GM12878 (cell line): ENCODE measurements at regions of chr16 and their contacts with region 1.

Region 1: GRCh38 chr16:23835390-23836077 is at the start of gene PRKCB:
- DNase-seq: no peak
- ATAC-seq: peak; percentile 74
- H3K4me3 ChIP-seq: peak within 1 kb of the TSS; percentile 97
- H3K27ac ChIP-seq: peak within 1 kb of the TSS; percentile 83
- H3K4me1 ChIP-seq: peaks cover 13% of the 10 kb centered on the region
- H3K27me3 ChIP-seq: no peaks in the 10 kb centered on the region
- CTCF ChIP-seq: no peak
- EP300 ChIP-seq: no peak
- POLR2A ChIP-seq: peak; percentile 74; the same call in 1 of the 2 replicates
- RAD21 ChIP-seq: no peak
- polyA plus RNA-seq, gene PRKCB: 42.4 to 60.2 TPM

Region 2: GRCh38 chr16:23640931-23641765 is 194.4 kb before region 1 on chr16 and contains the starts of genes DCTN5 and PALB2:
- CTCF ChIA-PET with region 1: no interaction called
- POLR2A ChIA-PET with region 1: no interaction called
- RAD21 ChIA-PET with region 1: no interaction called
- SMC1A ChIA-PET with region 1: no interaction called
- in situ Hi-C with region 1: no loop called
- intact Hi-C with region 1: loop called (anchors 5 kb)
- DNase-seq: peak; percentile 83
- ATAC-seq: peak; percentile 96
- H3K4me3 ChIP-seq: peak within 1 kb of the TSS; percentile 92
- H3K27ac ChIP-seq: peak within 1 kb of the TSS; percentile 84
- H3K4me1 ChIP-seq: peaks cover 3% of the 10 kb centered on the region; the same call in 1 of the 2 replicates
- H3K27me3 ChIP-seq: no peaks in the 10 kb centered on the region
- CTCF ChIP-seq: no peak
- EP300 ChIP-seq: no peak
- POLR2A ChIP-seq: peak; percentile 85
- RAD21 ChIP-seq: no peak
- polyA plus RNA-seq, gene DCTN5: 69.2 to 72.5 TPM
- polyA plus RNA-seq, gene PALB2: 9.2 to 15.1 TPM

Region 3: GRCh38 chr16:23863511-23864422 is 28.2 kb after region 1 on chr16:
- CTCF ChIA-PET with region 1: interaction called, 134 read pairs
- POLR2A ChIA-PET with region 1: interaction called, 79 read pairs
- RAD21 ChIA-PET with region 1: interaction called, 177 read pairs
- SMC1A ChIA-PET with region 1: interaction called, 466 read pairs
- in situ Hi-C with region 1: no loop called
- intact Hi-C with region 1: no loop called
- DNase-seq: no peak
- ATAC-seq: peak; percentile 85
- H3K4me3 ChIP-seq: peak overlapping the region; percentile 55
- H3K27ac ChIP-seq: peak overlapping the region; percentile 98
- H3K4me1 ChIP-seq: peaks cover 62% of the 10 kb centered on the region
- H3K27me3 ChIP-seq: no peaks in the 10 kb centered on the region
- CTCF ChIP-seq: no peak
- EP300 ChIP-seq: peak; percentile 85 to 95
- POLR2A ChIP-seq: 0 out of 2 replicates have a peak, but pooled peaks have one; percentile 22
- RAD21 ChIP-seq: no peak

Region 4: GRCh38 chr16:23877107-23878090 is 41.9 kb after region 1 on chr16:
- CTCF ChIA-PET with region 1: interaction called, 18 read pairs
- POLR2A ChIA-PET with region 1: interaction called, 5 read pairs
- RAD21 ChIA-PET with region 1: interaction called, 54 read pairs
- SMC1A ChIA-PET with region 1: interaction called, 48 read pairs
- in situ Hi-C with region 1: no loop called
- intact Hi-C with region 1: no loop called
- DNase-seq: no peak
- ATAC-seq: no peak; the same call in 2 of the 3 replicates
- H3K4me3 ChIP-seq: no peak overlapping the region
- H3K27ac ChIP-seq: peak overlapping the region; percentile 69
- H3K4me1 ChIP-seq: peaks cover 63% of the 10 kb centered on the region
- H3K27me3 ChIP-seq: no peaks in the 10 kb centered on the region
- CTCF ChIP-seq: peak; percentile 23 to 28 (median 27); a peak in 2 of 6 replicates
- EP300 ChIP-seq: no peak
- POLR2A ChIP-seq: no peak
- RAD21 ChIP-seq: peak; percentile 53

Region 5: DNA sequence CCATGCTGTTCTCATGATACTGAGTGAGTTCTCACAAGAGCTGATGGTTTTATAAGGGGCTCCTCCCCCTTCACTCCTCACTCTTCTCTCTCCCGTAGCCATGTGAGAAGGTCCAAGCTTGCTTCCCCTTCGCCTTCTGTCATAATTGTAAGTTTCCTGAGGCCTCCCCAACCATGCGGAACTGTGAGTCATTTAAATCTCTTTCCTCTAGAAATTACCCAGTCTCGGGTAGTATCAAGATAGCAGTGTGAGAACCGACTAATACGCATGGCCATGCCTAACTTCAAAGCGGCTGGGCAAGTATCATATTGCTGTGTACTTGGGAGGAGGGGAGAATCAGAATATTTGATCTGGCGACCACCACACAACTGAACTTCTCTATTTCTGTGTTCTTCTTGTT is 88.6 kb after region 1 on chr16:
- CTCF ChIA-PET with region 1: interaction called, 3 read pairs
- POLR2A ChIA-PET with region 1: no interaction called
- RAD21 ChIA-PET with region 1: interaction called, 4 read pairs
- SMC1A ChIA-PET with region 1: interaction called, 11 read pairs
- in situ Hi-C with region 1: no loop called
- intact Hi-C with region 1: no loop called
- DNase-seq: peak; percentile 42
- ATAC-seq: peak; percentile 87
- H3K4me3 ChIP-seq: no peak overlapping the region
- H3K27ac ChIP-seq: peak overlapping the region; percentile 66
- H3K4me1 ChIP-seq: peaks cover 21% of the 10 kb centered on the region
- H3K27me3 ChIP-seq: no peaks in the 10 kb centered on the region
- CTCF ChIP-seq: no peak
- EP300 ChIP-seq: peak in 1 of 2 experiments; percentile 18; a peak in 1 of 4 replicates
- POLR2A ChIP-seq: no peak
- RAD21 ChIP-seq: no peak

Region 6: GRCh38 chr16:24015923-24016322 is 180.4 kb after region 1 on chr16:
- CTCF ChIA-PET with region 1: interaction called, 38 read pairs
- POLR2A ChIA-PET with region 1: interaction called, 12 read pairs
- RAD21 ChIA-PET with region 1: interaction called, 39 read pairs
- SMC1A ChIA-PET with region 1: interaction called, 100 read pairs
- in situ Hi-C with region 1: no loop called
- intact Hi-C with region 1: loop called (anchors 1 kb)
- DNase-seq: no peak
- ATAC-seq: no peak
- H3K4me3 ChIP-seq: no peak overlapping the region
- H3K27ac ChIP-seq: no peak overlapping the region
- H3K4me1 ChIP-seq: peaks cover 58% of the 10 kb centered on the region
- H3K27me3 ChIP-seq: no peaks in the 10 kb centered on the region
- CTCF ChIP-seq: no peak
- EP300 ChIP-seq: no peak
- POLR2A ChIP-seq: no peak
- RAD21 ChIP-seq: no peak

Region 7: DNA sequence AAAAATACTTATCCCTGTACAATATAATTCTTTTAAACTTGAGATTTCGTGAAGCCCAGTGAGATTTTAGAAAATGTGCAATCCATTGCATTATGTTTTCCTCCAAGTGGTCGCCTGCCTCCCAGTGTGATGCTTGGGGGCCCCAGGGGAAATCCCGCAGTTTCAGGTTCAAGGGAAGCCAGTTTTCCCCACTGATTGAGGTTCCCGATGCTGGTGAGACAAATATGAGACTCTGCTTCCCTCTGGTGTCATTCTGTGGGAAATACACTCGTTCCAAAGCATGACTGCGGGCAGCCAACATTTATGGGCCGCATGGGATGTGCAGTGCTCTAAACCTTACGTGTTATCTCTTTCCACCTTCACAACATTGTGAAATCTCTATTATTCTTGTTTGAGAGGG is 201.1 kb after region 1 on chr16:
- CTCF ChIA-PET with region 1: no interaction called
- POLR2A ChIA-PET with region 1: no interaction called
- RAD21 ChIA-PET with region 1: no interaction called
- SMC1A ChIA-PET with region 1: interaction called, 3 read pairs
- in situ Hi-C with region 1: no loop called
- intact Hi-C with region 1: loop called (anchors 1 kb)
- DNase-seq: no peak
- ATAC-seq: peak; percentile 69
- H3K4me3 ChIP-seq: no peak overlapping the region
- H3K27ac ChIP-seq: no peak overlapping the region
- H3K4me1 ChIP-seq: peaks cover 8% of the 10 kb centered on the region
- H3K27me3 ChIP-seq: no peaks in the 10 kb centered on the region
- CTCF ChIP-seq: peak; percentile 68 to 81 (median 72); a peak in 5 of 6 replicates
- EP300 ChIP-seq: no peak
- POLR2A ChIP-seq: no peak
- RAD21 ChIP-seq: peak; percentile 88